Left ventricle myocardium superior (tissue), 1 donor: ENCODE measurements at regions of chr9 and their contacts with region 1.

Region 1: DNA sequence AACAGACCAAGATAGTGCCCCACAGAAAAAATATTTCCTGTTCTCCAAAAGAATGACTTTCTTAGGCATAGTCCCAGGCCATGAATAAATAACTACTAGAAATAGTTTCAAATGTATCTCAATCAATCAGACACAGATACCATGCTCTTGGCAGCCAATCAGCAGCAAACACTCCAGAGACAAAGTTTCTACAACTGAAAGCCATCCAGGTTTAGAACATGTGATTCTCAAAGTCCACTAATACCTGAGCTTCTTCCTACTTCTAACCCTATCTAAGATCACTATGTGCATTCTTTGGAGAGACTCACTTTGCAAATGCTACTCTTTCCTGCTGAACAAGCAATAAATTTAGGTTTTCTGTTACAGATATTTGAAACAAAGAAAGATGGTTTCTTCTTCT is 425.8 kb upstream of the GRIN3A start:
- DNase-seq: no peak
- ATAC-seq: no peak

Region 2: GRCh38 chr9:102202126-102202525 is 37.9 kb after region 1 on chr9:
- intact Hi-C with region 1: loop called (anchors 5 kb)
- DNase-seq: no peak
- ATAC-seq: no peak

Region 3: DNA sequence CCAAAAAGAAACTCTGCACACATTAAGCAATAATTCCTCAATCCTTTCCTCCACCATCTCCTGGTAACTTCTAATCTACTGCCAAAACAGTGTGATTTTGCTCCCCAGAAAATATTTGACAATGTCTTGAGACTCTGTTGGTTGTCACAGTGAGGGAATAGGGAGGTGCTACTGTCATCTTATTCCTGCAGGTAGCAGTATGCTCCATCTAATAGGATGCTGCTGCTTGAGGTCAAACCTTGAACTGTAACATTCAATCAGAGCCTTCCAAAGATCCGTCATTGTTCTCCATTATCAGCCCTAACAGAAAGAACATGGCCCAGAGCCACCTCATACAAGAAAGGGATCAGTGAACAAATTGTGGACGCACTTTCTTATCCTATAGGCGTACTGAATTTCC is 88.9 kb after region 1 on chr9:
- intact Hi-C with region 1: no loop called
- DNase-seq: no peak
- ATAC-seq: no peak

Region 4: GRCh38 chr9:102534031-102534430 is 369.8 kb after region 1 on chr9:
- intact Hi-C with region 1: loop called (anchors 5 kb)
- DNase-seq: no peak
- ATAC-seq: no peak